ENCODE measurements at regions of chr15 and their contacts with region 1.

Region 1: DNA sequence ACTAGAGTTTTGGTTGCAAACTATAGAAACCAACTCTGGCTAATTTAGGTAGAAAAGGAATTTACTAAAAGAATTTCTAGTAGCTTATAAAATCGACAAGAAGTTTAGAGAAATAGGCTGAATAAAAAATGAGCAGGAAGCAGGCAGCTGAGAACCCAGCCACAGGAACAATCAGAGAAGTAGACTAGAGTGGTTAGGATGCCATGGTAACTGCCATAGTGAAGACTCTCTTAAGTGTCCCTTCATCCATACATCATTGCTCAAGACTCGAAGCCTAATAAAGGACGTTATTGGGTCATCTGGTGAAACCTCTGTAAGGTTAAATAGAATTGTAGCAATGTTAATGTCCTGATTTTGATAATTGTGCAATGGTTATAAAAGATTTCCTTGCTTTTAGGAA is 13.8 kb downstream of the AVEN start:
- DNase-seq: no peak

Region 2: GRCh38 chr15:34122771-34123183 is 97.5 kb after region 1 on chr15:
- in situ Hi-C with region 1: loop called (anchors 5 kb)
- DNase-seq: no peak